ENCODE measurements at regions of chr19 and their contacts with region 1.

Region 1: DNA sequence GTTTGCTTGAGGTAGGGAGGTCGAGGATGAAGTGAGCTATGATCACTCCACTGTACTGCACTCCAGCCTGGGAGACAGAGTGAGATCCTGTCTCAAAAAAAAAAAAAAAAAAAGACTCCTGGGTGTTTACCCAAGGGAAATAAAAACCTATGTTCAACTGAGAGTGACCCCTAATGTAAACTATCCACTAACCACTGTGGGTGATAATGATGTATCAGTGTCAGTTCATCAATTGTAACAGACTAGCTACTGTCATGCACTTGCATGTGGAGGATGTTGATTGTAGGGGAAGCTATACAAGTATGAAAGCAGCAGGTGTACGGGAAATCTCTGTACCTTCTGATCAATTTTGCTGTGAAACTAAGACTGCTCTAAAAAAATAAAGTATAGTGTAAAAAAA is 2.6 kb upstream of the CIB3 start:
- DNase-seq: no peak
- H3K4me3 ChIP-seq: no peak overlapping the region
- H3K27ac ChIP-seq: no peak overlapping the region
- H3K4me1 ChIP-seq: no peaks in the 10 kb centered on the region
- H3K27me3 ChIP-seq: no peaks in the 10 kb centered on the region
- CTCF ChIP-seq: no peak

Region 2: DNA sequence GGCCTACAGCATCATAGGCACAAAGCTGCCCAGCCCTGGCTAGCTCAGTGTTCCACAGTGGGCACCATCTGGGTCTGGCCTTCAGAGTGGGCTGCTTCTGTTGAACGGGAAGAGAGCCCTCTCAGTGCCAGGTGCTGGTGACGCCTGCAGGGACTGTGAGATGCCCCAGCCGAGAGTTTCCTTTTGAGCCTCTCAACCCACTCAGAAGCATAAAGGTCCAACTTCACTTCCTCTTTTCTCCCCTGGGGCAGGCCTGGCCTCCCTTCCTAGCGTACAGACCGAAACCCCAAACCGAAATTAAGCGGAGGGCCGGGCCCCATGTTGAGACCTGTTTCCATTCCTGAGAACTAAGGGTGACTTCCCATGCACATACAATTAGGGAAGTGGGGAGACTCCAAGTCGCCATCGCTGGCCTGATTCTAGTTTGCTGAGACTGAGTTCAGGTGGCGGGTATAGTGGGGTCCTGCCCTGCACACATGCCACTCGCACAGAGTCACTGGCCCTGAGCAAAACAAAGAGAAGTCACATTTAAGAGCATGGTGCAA is 57.4 kb before region 1 on chr19:
- intact Hi-C with region 1: loop called (anchors 5 kb)
- DNase-seq: no peak
- H3K4me3 ChIP-seq: no peak overlapping the region
- H3K27ac ChIP-seq: peak overlapping the region; percentile 54
- H3K4me1 ChIP-seq: peaks cover 7% of the 10 kb centered on the region
- H3K27me3 ChIP-seq: no peaks in the 10 kb centered on the region
- CTCF ChIP-seq: no peak

Region 3: GRCh38 chr19:16233836-16234551 is 58.0 kb after region 1 on chr19:
- intact Hi-C with region 1: no loop called
- DNase-seq: no peak
- H3K4me3 ChIP-seq: no peak overlapping the region
- H3K27ac ChIP-seq: no peak overlapping the region
- H3K4me1 ChIP-seq: no peaks in the 10 kb centered on the region
- H3K27me3 ChIP-seq: no peaks in the 10 kb centered on the region
- CTCF ChIP-seq: no peak